ENCODE measurements at regions of chr18 and their contacts with region 1.

Region 1: DNA sequence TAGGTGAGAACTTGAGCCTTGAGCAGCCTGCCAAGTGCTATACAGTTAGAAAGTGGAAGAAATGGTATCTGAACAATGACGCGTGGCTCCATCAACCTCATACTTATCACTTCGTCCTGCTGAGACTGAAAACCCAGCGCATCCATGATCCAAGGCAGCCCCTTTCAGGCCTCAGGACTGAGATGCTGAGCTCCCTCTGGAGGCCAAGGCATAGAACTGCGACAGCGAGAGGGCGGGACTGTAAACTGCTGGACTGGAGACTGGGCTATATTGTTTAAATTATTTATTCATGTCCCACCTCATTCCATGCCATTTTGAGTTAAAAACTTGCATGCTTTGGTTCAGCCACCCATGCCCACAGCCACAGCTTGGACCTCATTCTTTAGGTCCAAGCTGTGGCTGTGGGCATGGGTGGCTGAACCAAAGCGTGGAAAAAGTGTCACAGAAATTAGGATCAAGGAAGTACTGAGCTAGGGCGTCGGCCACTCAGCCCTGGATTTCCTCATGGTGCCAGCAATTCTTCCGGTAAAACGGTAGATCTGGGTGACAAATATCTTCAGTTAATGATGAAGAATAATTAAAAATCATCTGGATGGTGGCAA is 195.5 kb downstream of the L3MBTL4 start:
- DNase-seq: peak; percentile 73
- ATAC-seq: peak; percentile 100
- H3K4me3 ChIP-seq: no peak overlapping the region
- H3K27ac ChIP-seq: no peak overlapping the region
- H3K4me1 ChIP-seq: no peaks in the 10 kb centered on the region
- H3K27me3 ChIP-seq: no peaks in the 10 kb centered on the region
- CTCF ChIP-seq: peak; percentile 94
- POLR2A ChIP-seq: no peak
- RAD21 ChIP-seq: peak; percentile 95

Region 2: DNA sequence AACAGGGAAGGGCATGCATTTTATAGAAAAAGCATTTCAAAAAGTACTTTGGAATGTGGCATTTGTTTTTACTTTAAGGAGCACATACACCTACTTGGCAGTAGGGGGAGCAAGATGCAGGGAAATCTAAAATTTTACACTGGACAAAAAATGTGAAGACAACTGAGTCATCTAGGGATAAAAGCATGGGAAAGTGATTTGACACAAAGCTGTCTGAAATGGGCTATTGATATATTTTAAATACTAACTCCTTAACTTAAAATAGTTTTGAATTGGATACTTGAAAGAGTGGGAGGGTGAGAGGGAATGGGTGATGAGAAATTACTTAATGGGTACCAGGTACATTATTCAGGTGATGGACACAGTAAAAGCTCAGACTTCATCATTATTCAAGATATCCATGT is 339.7 kb before region 1 on chr18:
- CTCF ChIA-PET with region 1: interaction called, 16 read pairs
- POLR2A ChIA-PET with region 1: no interaction called
- dilution Hi-C with region 1: no loop called
- in situ Hi-C with region 1: loop called (anchors 5 kb)
- intact Hi-C with region 1: loop called (anchors 1 kb)
- DNase-seq: peak; percentile 65
- ATAC-seq: peak; percentile 89
- H3K4me3 ChIP-seq: no peak overlapping the region
- H3K27ac ChIP-seq: no peak overlapping the region
- H3K4me1 ChIP-seq: no peaks in the 10 kb centered on the region
- H3K27me3 ChIP-seq: peaks cover 3% of the 10 kb centered on the region
- CTCF ChIP-seq: peak; percentile 93
- POLR2A ChIP-seq: no peak
- RAD21 ChIP-seq: peak; percentile 93

Region 3: DNA sequence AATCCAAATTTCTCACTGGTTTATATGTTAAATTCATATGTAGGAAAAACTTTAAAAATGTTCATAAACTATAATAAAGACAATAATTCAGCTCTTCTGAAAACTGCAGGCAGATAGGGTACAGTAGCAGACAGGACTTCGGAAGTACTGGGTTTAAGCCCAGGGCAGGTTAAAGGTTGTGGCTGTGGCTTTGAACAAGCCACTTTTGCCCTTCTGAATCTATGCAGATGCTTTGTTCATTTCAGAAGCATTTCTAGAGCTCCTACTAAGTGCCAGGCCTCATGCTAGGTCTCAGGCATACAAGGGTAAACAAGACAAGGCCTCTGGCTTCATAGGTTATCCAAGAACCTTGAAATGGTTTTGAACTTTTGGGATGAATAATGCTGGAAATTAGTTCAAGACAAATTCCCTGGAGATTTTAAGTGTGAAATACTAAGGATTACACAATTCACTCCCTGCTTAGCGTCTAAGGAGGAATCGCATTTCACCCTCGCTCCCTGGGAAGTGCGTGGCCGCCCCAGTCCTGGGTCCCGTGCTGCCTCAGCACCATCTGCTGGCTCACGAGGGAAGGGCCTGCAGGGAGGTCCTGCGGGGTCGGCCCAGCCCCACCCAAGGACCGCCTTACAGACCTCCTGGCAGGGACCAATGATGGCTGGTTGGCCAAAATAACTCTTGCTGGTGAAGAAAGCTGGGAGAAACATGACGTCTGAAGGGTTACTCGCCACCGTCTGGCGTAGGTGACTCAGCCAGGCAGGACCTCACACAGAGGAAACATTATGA is 263.2 kb after region 1 on chr18:
- CTCF ChIA-PET with region 1: no interaction called
- POLR2A ChIA-PET with region 1: no interaction called
- dilution Hi-C with region 1: no loop called
- in situ Hi-C with region 1: no loop called
- intact Hi-C with region 1: loop called (anchors 5 kb)
- DNase-seq: peak; percentile 67
- ATAC-seq: peak; percentile 98
- H3K4me3 ChIP-seq: no peak overlapping the region
- H3K27ac ChIP-seq: no peak overlapping the region
- H3K4me1 ChIP-seq: no peaks in the 10 kb centered on the region
- H3K27me3 ChIP-seq: peaks cover 2% of the 10 kb centered on the region; the same call in 1 of the 2 replicates
- CTCF ChIP-seq: peak; percentile 54
- POLR2A ChIP-seq: no peak
- RAD21 ChIP-seq: peak; percentile 67

Region 4: DNA sequence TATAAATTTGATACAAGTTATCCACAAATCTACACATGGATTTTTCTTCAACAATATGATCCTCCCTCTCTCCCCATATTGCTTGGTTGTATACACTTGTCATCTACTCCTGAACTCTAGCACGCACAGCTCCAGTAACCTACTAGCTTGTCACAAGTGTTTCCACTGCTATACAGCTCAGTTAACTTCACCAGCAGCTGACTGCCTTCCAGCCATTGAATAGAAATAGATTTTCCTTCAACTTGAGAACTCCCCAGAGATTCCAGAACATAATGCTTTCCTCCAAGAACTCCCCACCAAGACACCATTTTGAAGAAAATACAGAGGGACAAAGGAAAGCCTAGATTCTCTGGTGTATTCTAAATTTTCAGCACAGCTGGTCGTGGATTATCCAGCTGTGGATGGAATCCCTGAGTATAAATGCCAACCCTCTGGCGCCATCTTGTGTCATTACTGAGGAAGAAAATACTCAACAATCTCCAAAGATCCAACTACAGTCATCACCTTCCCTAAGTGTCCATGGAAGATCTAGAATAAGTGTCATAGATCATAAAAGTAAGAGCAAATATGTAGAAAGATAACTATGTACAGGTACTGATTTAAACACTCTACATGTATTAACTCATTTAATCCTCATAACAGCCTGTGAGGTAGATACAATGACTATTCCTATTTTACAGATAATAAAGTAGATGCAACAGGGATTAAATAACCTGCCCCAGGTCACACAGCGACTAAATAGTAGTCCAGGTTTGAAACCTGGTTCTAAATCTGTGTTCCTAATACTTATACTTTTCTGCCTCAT is 667.0 kb after region 1 on chr18:
- CTCF ChIA-PET with region 1: no interaction called
- POLR2A ChIA-PET with region 1: no interaction called
- dilution Hi-C with region 1: no loop called
- in situ Hi-C with region 1: loop called (anchors 25 kb)
- intact Hi-C with region 1: no loop called
- DNase-seq: peak; percentile 59
- ATAC-seq: peak; percentile 83
- H3K4me3 ChIP-seq: no peak overlapping the region
- H3K27ac ChIP-seq: no peak overlapping the region; the same call in 1 of the 2 replicates
- H3K4me1 ChIP-seq: peaks cover 3% of the 10 kb centered on the region
- H3K27me3 ChIP-seq: no peaks in the 10 kb centered on the region
- CTCF ChIP-seq: peak; percentile 88
- POLR2A ChIP-seq: 0 out of 2 replicates have a peak, but pooled peaks have one; percentile 40
- RAD21 ChIP-seq: peak; percentile 97

Measured in IMR-90 (cell line).